HEK293 (cell line): ENCODE measurements at regions of chr17 and their contacts with region 1.

Region 1: DNA sequence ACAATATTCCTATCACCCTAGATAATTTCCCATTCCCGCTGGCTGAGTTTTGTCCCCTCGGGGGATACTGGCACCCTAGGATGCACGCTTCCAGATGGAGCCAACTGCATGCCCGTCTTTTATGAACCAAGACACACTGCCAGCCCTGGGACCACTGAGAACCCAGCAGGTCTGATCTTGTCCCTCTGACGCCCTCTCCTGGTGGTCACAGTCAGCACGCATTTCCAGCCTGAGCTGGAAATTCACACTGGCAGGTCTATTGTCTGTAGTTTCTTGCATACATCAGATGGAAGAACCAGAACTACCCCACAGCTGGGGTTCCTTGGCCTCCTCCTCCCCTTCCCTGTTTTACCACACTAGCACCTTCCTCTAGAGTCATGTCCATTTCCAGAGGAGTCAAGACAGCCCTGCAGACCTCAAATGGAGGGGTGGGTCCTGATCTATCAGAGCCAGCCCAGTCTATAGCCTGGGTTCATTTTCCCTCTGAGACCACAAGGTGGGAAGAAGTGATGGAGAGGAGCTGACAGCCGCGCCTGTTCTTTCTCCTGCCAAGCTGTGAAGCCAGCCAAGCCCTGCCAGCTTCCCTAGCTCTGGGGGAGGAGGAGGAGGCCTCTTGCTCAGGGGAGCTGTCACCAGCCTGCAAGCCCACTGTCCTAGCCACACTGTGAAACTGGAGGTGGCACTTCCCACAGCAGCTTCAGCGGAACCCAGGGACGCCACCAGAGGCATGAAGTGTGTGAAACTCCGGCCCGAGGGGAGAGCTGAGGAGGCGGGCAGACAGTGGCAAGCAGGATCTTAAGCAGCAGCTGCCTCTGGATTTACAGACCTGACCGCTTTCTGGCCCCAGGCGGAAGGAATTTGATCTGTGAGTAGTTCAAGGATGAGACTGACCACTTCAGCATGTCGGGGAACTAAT is 29.3 kb downstream of the MXRA7 start:
- H3K4me3 ChIP-seq: no peak overlapping the region
- H3K27ac ChIP-seq: no peak overlapping the region
- H3K4me1 ChIP-seq: no peaks in the 10 kb centered on the region
- CTCF ChIP-seq: peak; percentile 88

Region 2: GRCh38 chr17:76547184-76547641 is 134.3 kb before region 1 on chr17:
- CTCF ChIA-PET with region 1: interaction called, 13 read pairs
- POLR2A ChIA-PET with region 1: no interaction called
- H3K4me3 ChIP-seq: no peak overlapping the region
- H3K27ac ChIP-seq: no peak overlapping the region
- H3K4me1 ChIP-seq: peaks cover 21% of the 10 kb centered on the region
- CTCF ChIP-seq: peak; percentile 86

Region 3: GRCh38 chr17:76567634-76568432 is 113.6 kb before region 1 on chr17:
- CTCF ChIA-PET with region 1: interaction called, 69 read pairs
- POLR2A ChIA-PET with region 1: interaction called, 3 read pairs
- H3K4me3 ChIP-seq: no peak overlapping the region
- H3K27ac ChIP-seq: 0 out of 2 replicates have a peak overlapping the region, but pooled peaks have one; percentile 5
- H3K4me1 ChIP-seq: no peaks in the 10 kb centered on the region
- CTCF ChIP-seq: no peak

Region 4: DNA sequence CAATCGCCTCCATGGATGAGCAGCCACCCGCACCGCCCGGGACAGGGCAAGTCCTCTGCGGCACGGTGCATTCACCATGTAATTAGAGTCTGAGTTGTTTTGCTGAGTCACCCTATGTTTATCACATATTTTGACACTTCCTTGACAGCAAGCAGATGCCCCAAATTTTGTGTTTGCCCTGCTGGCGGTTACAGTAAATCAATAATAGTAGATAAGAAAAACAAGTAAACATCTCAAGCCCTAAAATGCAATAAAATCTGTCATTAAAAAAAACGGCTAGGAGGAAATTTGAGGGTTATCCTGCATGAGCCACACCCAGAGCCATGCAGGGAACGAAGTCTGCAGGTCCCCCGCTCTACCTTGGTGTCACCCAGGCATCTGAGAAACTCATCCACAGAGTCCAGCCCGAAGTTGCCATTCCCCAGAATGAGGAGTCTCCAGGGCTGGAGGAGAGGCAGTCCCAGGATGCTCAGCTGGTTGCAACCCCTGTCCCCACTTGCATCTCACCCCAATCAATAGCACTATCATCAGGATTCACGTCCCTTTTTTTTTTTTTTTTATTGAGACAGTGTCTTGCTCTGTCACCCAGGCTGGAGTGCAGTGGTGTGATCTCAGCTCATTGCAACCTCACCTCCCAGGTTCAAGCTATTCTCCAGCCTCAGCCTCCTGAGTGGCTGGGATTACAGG is 21.4 kb before region 1 on chr17:
- CTCF ChIA-PET with region 1: interaction called, 10 read pairs
- POLR2A ChIA-PET with region 1: interaction called, 3 read pairs
- H3K4me3 ChIP-seq: no peak overlapping the region
- H3K27ac ChIP-seq: peak overlapping the region; percentile 44; the same call in 1 of the 2 replicates
- H3K4me1 ChIP-seq: peaks cover 10% of the 10 kb centered on the region
- CTCF ChIP-seq: no peak

Region 5: DNA sequence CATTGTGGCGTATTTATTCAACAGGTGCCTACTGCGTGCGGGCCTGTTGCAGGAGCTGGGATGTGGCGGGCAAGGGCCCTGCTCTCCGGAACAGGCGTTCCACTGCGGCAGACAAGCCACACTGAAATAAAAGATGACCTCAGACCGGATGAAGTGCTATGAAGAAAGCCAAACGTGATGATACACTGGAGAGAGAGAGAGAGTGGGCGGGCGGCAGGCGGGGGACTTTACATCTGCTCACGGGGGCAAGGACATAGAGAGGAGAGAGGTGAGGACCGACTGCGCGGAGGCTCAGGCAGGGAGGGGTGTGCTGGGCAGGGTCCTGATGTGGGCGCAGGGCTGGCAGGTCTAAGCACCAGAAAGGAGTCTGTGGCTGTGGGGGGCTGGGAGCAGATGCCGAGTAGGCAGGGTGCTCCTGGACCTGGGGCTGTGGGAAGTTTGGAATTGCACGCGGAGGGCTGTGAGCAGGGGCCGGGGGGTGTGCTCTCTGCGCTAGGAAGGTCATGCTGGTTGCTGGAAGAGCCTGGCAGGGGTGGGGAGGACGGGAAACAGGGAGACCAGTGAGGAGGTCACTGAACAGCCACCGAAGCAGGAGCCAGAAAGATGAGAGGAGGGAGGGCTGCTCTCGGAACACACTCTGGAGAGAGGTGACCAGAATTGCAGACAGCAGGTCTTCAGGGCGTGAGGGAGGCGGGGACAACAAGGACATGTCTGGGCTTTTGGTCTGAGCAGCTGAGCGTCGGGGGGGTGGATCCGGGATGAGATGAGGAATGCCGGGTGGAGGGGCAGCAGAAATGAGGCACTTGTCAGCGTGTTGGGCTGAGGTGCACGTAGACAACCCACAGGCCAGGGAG is 19.4 kb after region 1 on chr17:
- CTCF ChIA-PET with region 1: interaction called, 22 read pairs
- POLR2A ChIA-PET with region 1: interaction called, 9 read pairs
- H3K4me3 ChIP-seq: peak overlapping the region; percentile 25
- H3K27ac ChIP-seq: peak overlapping the region; percentile 56
- H3K4me1 ChIP-seq: peaks cover 40% of the 10 kb centered on the region
- CTCF ChIP-seq: no peak

Region 6: GRCh38 chr17:76714822-76715495 is 33.5 kb after region 1 on chr17:
- CTCF ChIA-PET with region 1: interaction called, 175 read pairs
- POLR2A ChIA-PET with region 1: interaction called, 7 read pairs
- H3K4me3 ChIP-seq: no peak overlapping the region
- H3K27ac ChIP-seq: no peak overlapping the region
- H3K4me1 ChIP-seq: peaks cover 35% of the 10 kb centered on the region
- CTCF ChIP-seq: peak; percentile 66; the same call in 1 of the 2 replicates

Region 7: GRCh38 chr17:76968707-76969597 is 287.5 kb after region 1 on chr17:
- CTCF ChIA-PET with region 1: no interaction called
- POLR2A ChIA-PET with region 1: no interaction called
- H3K4me3 ChIP-seq: peak overlapping the region; percentile 6
- H3K27ac ChIP-seq: peak overlapping the region; percentile 64; the same call in 1 of the 2 replicates
- H3K4me1 ChIP-seq: peaks cover 10% of the 10 kb centered on the region
- CTCF ChIP-seq: peak; percentile 64; the same call in 1 of the 2 replicates

Region 8: DNA sequence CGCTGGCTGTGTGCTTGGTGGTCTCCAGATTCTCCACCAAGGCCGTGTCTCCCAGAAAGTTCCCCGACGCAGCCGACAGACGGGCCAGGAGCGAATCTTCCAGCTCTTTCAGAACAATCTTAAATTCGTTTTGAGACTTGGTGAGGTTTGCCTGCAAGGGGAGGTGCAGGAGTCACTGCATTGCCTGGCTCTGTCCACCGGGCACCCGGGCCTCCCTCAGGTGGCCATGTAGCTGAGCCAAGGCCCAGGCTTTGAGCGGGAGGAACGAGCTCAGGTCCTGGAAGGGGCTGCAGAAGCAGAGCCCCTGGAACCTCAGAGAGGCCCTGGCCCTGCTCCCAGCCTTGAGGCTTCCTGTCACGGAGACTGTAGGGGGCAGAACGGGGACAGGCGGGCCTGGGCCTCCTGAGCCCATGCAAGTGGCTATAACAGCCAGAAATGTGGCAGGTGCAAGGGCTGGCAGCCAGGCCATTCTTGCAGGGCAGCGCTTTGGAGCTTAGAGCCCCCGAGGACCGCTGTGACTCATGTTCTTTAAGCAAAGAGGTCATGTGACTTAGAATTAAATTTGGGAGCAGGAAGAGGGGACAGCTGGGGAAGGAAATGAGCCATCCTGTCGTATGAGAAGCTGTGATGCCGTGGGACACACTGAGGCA is 1769.3 kb after region 1 on chr17:
- CTCF ChIA-PET with region 1: no interaction called
- POLR2A ChIA-PET with region 1: no interaction called
- H3K4me3 ChIP-seq: no peak overlapping the region
- H3K27ac ChIP-seq: no peak overlapping the region
- H3K4me1 ChIP-seq: no peaks in the 10 kb centered on the region
- CTCF ChIP-seq: no peak